ENCODE measurements at regions of chr2 and their contacts with region 1.

Region 1: GRCh38 chr2:75466708-75467311 is 93.9 kb downstream of the EVA1A start:
- DNase-seq: no peak
- ATAC-seq: no peak

Region 2: DNA sequence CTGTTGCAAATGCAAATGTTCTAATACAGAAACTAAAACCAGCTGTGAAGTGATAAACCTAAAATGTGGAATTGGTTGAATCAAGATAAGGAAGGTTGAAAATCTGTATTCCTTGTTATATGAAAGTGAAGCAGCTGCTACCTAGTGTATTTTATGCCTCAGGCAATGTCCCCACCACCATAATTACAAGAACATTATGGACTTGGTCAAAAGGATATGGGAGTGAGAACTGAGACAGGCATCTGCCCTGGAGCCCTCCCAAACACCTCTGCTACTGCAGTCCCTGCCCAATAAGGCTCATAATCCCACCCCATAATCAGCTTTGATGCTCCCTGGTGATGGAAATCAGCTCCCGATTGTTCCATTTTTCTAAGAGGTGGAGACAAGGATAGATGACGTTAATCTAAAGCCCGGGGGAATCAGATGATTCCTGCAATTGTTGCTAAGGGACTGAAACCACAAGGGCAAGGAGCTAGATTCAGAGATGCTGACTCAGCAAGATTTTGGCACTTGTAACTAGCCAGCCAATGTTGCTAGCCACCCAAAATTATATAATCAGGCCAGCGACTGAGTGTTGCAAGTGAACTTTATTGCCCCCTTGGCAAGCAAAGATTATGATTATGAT is 24.4 kb after region 1 on chr2:
- intact Hi-C with region 1: no loop called
- DNase-seq: no peak
- ATAC-seq: no peak

Region 3: GRCh38 chr2:75608684-75609333 is 142.0 kb after region 1 on chr2:
- intact Hi-C with region 1: loop called (anchors 1 kb)
- DNase-seq: peak; percentile 73
- ATAC-seq: peak; percentile 81

Region 4: GRCh38 chr2:75627895-75628504 is 161.2 kb after region 1 on chr2:
- intact Hi-C with region 1: loop called (anchors 5 kb)
- DNase-seq: peak; percentile 81
- ATAC-seq: peak; percentile 57

Measured in Right ventricle myocardium inferior (tissue), 1 donor.